ENCODE measurements at regions of chr18 and their contacts with region 1.

Region 1: GRCh38 chr18:63016270-63016669 is 300.9 kb downstream of the PHLPP1 start:
- DNase-seq: peak; percentile 74
- CTCF ChIP-seq: peak; percentile 80

Region 2: DNA sequence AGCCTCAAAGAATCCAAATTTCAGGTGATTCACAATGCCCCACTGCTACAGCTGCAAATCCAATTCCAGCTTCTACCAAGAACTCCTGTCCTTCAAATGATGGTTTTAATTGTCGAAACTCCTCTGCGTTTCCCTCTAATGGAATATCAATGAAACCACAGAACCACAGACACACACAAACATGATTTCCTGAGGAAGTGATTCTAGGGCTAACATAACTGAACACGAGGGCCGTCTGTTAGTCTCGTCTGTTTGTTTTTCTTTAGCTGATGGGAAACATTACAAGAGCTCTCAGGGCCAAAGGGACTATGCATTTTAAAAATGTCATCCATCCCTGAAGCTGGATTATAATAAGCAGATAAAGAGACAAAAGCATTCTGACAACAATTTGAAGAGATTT is 1182.9 kb before region 1 on chr18:
- in situ Hi-C with region 1: no loop called
- DNase-seq: no peak
- CTCF ChIP-seq: no peak

Region 3: GRCh38 chr18:63063171-63063570 is 46.9 kb after region 1 on chr18:
- in situ Hi-C with region 1: loop called (anchors 10 kb)
- DNase-seq: no peak
- CTCF ChIP-seq: no peak

Region 4: GRCh38 chr18:63131106-63131958 is 115.1 kb after region 1 on chr18:
- in situ Hi-C with region 1: loop called (anchors 25 kb)
- DNase-seq: peak; percentile 51
- CTCF ChIP-seq: peak; percentile 52

Region 5: GRCh38 chr18:63329431-63330145 is 313.3 kb after region 1 on chr18:
- in situ Hi-C with region 1: loop called (anchors 5 kb)
- DNase-seq: no peak
- CTCF ChIP-seq: no peak

Region 6: GRCh38 chr18:63439334-63439733 is 423.1 kb after region 1 on chr18:
- in situ Hi-C with region 1: loop called (anchors 10 kb)
- DNase-seq: peak; percentile 58
- CTCF ChIP-seq: peak; percentile 79

Region 7: DNA sequence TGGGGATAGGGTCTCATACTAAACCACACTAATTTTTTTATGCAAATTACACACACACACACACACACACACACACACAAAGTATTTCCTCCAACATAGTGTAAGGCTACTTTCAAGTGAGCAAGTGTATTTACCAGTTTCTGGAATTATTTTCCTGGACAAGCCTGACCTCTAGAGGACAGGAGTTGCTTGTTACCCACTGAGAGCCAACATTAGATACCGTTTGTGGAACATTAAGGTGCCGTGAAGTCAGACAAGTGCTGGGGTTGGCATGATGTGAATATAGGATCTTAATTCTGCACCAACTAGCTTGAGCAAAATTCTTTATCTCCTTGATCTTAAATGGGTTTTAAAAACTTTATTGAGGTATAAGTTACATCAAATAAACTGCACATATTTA is 831.9 kb after region 1 on chr18:
- in situ Hi-C with region 1: loop called (anchors 25 kb)
- DNase-seq: no peak
- CTCF ChIP-seq: peak; percentile 54

Measured in GM13977 (cell line).